ENCODE measurements at regions of chr3 and their contacts with region 1.

Region 1: GRCh38 chr3:184371570-184372018 is 6.4 kb downstream of the THPO start:
- DNase-seq: peak; percentile 87 to 94
- H3K4me3 ChIP-seq: no peak overlapping the region
- H3K27ac ChIP-seq: no peak overlapping the region
- H3K4me1 ChIP-seq: peaks cover 6 to 42% (median 29%) of the 10 kb centered on the region in 4 donors
- H3K27me3 ChIP-seq: peaks cover 0 to 7% (median 0%) of the 10 kb centered on the region in 3 donors
- CTCF ChIP-seq: peak in 5 of 7 experiments; percentile 87 to 97 (median 93)
- EP300 ChIP-seq: no peak
- POLR2A ChIP-seq: no peak

Region 2: DNA sequence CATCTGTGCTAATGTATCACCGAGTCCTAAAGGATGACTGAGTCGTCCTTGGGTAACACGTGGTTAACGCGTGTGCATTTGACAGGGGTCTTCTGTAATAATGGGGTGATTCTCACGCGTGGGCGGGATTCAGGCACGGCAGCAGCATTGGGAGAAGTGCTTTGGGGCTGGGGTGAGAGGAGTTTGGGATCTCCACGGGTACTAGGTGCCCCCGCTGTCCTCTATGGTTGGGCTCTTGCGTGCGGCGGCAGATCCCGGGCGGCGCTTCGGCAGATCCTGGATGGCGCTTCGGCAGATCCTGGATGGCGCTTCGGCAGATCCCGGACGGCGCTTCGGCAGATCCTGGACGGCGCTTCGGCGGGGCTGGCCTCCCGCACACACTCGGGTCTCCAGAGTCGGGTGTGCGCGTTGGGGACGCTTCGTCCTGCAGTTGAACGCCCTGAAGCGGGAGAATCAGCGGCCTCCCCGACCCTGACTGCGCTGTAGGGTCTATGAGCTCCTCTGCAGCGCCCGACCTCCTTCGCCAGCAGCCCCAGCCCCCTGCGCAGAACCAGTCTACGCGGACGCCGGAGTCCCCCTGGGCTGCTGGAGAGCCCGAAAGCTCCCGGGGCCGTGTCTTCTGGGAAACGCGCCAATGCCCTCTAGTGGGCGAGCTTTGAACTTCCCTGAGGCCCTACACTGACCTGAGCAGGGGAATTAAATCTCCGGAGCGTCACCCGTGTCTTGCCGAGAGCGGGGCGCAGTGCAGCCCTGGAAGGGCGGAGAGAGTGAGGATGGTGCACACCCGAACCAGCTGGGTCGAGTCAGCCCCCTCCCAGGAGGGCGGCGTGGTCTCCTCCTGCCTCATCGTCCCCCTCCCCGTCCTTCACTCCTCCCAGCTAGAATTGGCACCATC is 141.9 kb after region 1 on chr3:
- intact Hi-C with region 1: loop called (anchors 10 kb)
- DNase-seq: peak; percentile 91 to 93
- H3K4me3 ChIP-seq: peak overlapping the region; percentile 41 to 51 (median 46)
- H3K27ac ChIP-seq: peak overlapping the region in 1 of 5 donors; percentile 46
- H3K4me1 ChIP-seq: peaks cover 5 to 20% (median 13%) of the 10 kb centered on the region in 4 donors
- H3K27me3 ChIP-seq: peaks cover 4 to 71% (median 23%) of the 10 kb centered on the region in 3 donors
- CTCF ChIP-seq: peak in 5 of 7 experiments; percentile 83 to 92 (median 90)
- EP300 ChIP-seq: no peak
- POLR2A ChIP-seq: no peak

Region 3: GRCh38 chr3:184632551-184633236 is 261.1 kb after region 1 on chr3:
- intact Hi-C with region 1: no loop called
- DNase-seq: peak; percentile 42 to 78
- H3K4me3 ChIP-seq: no peak overlapping the region
- H3K27ac ChIP-seq: no peak overlapping the region
- H3K4me1 ChIP-seq: peaks cover 0 to 28% (median 4%) of the 10 kb centered on the region in 4 donors
- H3K27me3 ChIP-seq: peaks cover 0 to 12% (median 0%) of the 10 kb centered on the region in 3 donors
- CTCF ChIP-seq: no peak
- EP300 ChIP-seq: no peak
- POLR2A ChIP-seq: no peak

Measured in stomach (tissue), 19 donors.